Activated B cell treated with CpG ODN at 0.5 μM for 24 hours (primary cell): ENCODE measurements at regions of chr3 and their contacts with region 1.

Region 1: DNA sequence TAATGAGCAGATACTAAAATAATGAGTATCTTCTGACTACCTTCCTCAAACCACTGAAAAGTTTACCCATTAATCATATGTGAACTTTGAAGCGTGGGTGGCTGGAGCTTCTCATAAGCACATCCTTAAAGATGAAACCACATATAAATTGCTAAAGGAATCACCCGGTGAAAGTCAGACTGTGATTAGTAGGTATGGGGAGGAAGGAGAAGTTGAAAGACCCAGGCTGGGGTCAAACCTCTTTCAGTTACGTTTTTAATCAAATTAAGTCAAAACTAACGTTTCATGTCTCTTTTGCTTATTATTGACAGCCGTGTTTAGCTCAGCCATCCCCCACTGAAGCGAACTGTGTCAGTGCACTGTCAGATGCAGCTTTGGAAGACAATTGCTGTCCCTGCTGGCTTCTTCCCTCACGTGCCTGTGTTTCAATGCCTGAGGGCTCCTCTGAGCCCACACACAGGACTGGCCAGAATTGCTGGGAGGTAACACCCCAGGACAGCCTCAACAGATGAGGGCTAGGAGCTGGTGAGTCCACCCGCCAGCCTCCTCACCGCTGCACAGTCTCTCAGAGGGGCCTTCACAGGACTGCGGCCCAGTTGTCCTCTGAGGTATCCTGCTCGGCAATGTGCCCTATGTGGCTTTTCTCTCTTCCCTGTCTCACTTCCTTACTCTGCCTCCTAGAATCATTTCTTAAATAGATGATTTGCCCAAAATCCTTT is 29.3 kb upstream of the SH3BP5 start:
- DNase-seq: peak; percentile 44
- ATAC-seq: peak; percentile 70
- H3K4me3 Mint-ChIP-seq: peak overlapping the region; percentile 64
- H3K27ac Mint-ChIP-seq: peak overlapping the region; percentile 74
- H3K4me1 Mint-ChIP-seq: peaks cover 65% of the 10 kb centered on the region
- H3K27me3 Mint-ChIP-seq: no peaks in the 10 kb centered on the region
- CTCF ChIP-seq: no peak

Region 2: GRCh38 chr3:15159501-15160136 is 202.0 kb before region 1 on chr3:
- CTCF ChIA-PET with region 1: no interaction called
- POLR2A ChIA-PET with region 1: no interaction called
- intact Hi-C with region 1: no loop called
- DNase-seq: no peak
- ATAC-seq: no peak
- H3K4me3 Mint-ChIP-seq: no peak overlapping the region
- H3K27ac Mint-ChIP-seq: no peak overlapping the region
- H3K4me1 Mint-ChIP-seq: peaks cover 6% of the 10 kb centered on the region
- H3K27me3 Mint-ChIP-seq: peaks cover 25% of the 10 kb centered on the region
- CTCF ChIP-seq: no peak

Region 3: GRCh38 chr3:15377961-15378791 is 16.5 kb after region 1 on chr3:
- CTCF ChIA-PET with region 1: interaction called, 8 read pairs
- POLR2A ChIA-PET with region 1: interaction called, 20 read pairs
- intact Hi-C with region 1: loop called (anchors 1 kb)
- DNase-seq: peak; percentile 88
- ATAC-seq: peak; percentile 94
- H3K4me3 Mint-ChIP-seq: peak overlapping the region; percentile 44
- H3K27ac Mint-ChIP-seq: peak overlapping the region; percentile 91
- H3K4me1 Mint-ChIP-seq: peaks cover 29% of the 10 kb centered on the region
- H3K27me3 Mint-ChIP-seq: no peaks in the 10 kb centered on the region
- CTCF ChIP-seq: no peak

Region 4: GRCh38 chr3:15384510-15385237 is 23.0 kb after region 1 on chr3:
- CTCF ChIA-PET with region 1: interaction called, 4 read pairs
- POLR2A ChIA-PET with region 1: interaction called, 20 read pairs
- intact Hi-C with region 1: loop called (anchors 1 kb)
- DNase-seq: no peak
- ATAC-seq: peak; percentile 90
- H3K4me3 Mint-ChIP-seq: peak overlapping the region; percentile 71
- H3K27ac Mint-ChIP-seq: peak overlapping the region; percentile 95
- H3K4me1 Mint-ChIP-seq: peaks cover 79% of the 10 kb centered on the region
- H3K27me3 Mint-ChIP-seq: no peaks in the 10 kb centered on the region
- CTCF ChIP-seq: no peak